Activated CD8-positive, alpha-beta T cell treated with anti-CD3 and anti-CD28 coated beads, Interleukin-2, amount 10 ng/mL, durations not matched to agents 7 days and 5 days (primary cell): ENCODE measurements at regions of chr9 and their contacts with region 1.

Region 1: GRCh38 chr9:97982683-97983588 is at the start of gene ANP32B:
- DNase-seq: peak; percentile 95
- ATAC-seq: peak; percentile 83
- H3K4me3 Mint-ChIP-seq: peak within 1 kb of the TSS; percentile 84
- H3K27ac Mint-ChIP-seq: peak within 1 kb of the TSS; percentile 95
- H3K4me1 Mint-ChIP-seq: peaks cover 48% of the 10 kb centered on the region
- H3K27me3 Mint-ChIP-seq: no peaks in the 10 kb centered on the region
- total RNA-seq, gene ANP32B: 347 to 354 TPM

Region 2: GRCh38 chr9:97944612-97945011 is 38.3 kb before region 1 on chr9:
- CTCF ChIA-PET with region 1: no interaction called
- POLR2A ChIA-PET with region 1: no interaction called
- DNase-seq: no peak
- ATAC-seq: no peak
- H3K4me3 Mint-ChIP-seq: no peak overlapping the region
- H3K27ac Mint-ChIP-seq: no peak overlapping the region
- H3K4me1 Mint-ChIP-seq: no peaks in the 10 kb centered on the region
- H3K27me3 Mint-ChIP-seq: peaks cover 30% of the 10 kb centered on the region

Region 3: GRCh38 chr9:97972753-97973152 is 10.2 kb before region 1 on chr9:
- CTCF ChIA-PET with region 1: interaction called, 12 read pairs
- POLR2A ChIA-PET with region 1: interaction called, 15 read pairs
- DNase-seq: no peak
- ATAC-seq: no peak
- H3K4me3 Mint-ChIP-seq: no peak overlapping the region
- H3K27ac Mint-ChIP-seq: no peak overlapping the region
- H3K4me1 Mint-ChIP-seq: peaks cover 12% of the 10 kb centered on the region
- H3K27me3 Mint-ChIP-seq: peaks cover 4% of the 10 kb centered on the region

Region 4: GRCh38 chr9:97993000-97993399 is 10.1 kb after region 1 on chr9:
- CTCF ChIA-PET with region 1: interaction called, 5 read pairs
- POLR2A ChIA-PET with region 1: interaction called, 11 read pairs
- DNase-seq: no peak
- ATAC-seq: peak; percentile 76
- H3K4me3 Mint-ChIP-seq: peak overlapping the region; percentile 55
- H3K27ac Mint-ChIP-seq: peak overlapping the region; percentile 86
- H3K4me1 Mint-ChIP-seq: peaks cover 84% of the 10 kb centered on the region
- H3K27me3 Mint-ChIP-seq: no peaks in the 10 kb centered on the region

Region 5: DNA sequence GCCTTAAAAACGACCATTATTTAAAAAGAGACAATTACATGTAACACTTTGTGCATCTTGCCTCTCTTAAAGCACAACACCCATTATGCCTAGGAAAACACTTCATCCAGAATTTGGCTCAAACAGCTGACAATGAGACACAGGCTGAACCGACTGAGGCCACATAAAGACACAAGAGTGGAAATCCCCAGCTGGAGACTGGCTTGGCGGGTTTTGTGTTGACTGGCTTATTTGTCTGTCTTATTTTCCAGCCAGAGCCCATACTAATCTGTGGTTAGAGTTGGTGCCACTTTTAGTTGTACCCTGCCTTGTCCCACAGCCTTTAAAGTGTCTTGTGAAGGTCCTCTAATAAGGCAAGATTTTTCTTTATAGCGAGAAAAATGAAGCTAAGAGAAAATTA is 114.9 kb after region 1 on chr9:
- CTCF ChIA-PET with region 1: no interaction called
- POLR2A ChIA-PET with region 1: no interaction called
- DNase-seq: no peak
- ATAC-seq: no peak
- H3K4me3 Mint-ChIP-seq: no peak overlapping the region
- H3K27ac Mint-ChIP-seq: peak overlapping the region; percentile 8
- H3K4me1 Mint-ChIP-seq: peaks cover 56% of the 10 kb centered on the region
- H3K27me3 Mint-ChIP-seq: no peaks in the 10 kb centered on the region